ENCODE measurements at regions of chr18 and their contacts with region 1.

Region 1: GRCh38 chr18:26307189-26307773 is 81.0 kb downstream of the TAF4B start:
- DNase-seq: no peak
- H3K4me3 ChIP-seq: no peak overlapping the region
- H3K27ac ChIP-seq: no peak overlapping the region
- H3K4me1 ChIP-seq: no peaks in the 10 kb centered on the region
- H3K27me3 ChIP-seq: no peaks in the 10 kb centered on the region
- CTCF ChIP-seq: peak in 2 of 3 experiments; percentile 49

Region 2: GRCh38 chr18:26034850-26035497 is 272.3 kb before region 1 on chr18:
- intact Hi-C with region 1: no loop called
- DNase-seq: no peak
- H3K4me3 ChIP-seq: no peak overlapping the region
- H3K27ac ChIP-seq: no peak overlapping the region
- H3K4me1 ChIP-seq: no peaks in the 10 kb centered on the region
- H3K27me3 ChIP-seq: no peaks in the 10 kb centered on the region
- CTCF ChIP-seq: no peak

Region 3: GRCh38 chr18:26335571-26336487 is 28.5 kb after region 1 on chr18:
- intact Hi-C with region 1: no loop called
- DNase-seq: no peak
- H3K4me3 ChIP-seq: no peak overlapping the region
- H3K27ac ChIP-seq: no peak overlapping the region
- H3K4me1 ChIP-seq: no peaks in the 10 kb centered on the region
- H3K27me3 ChIP-seq: no peaks in the 10 kb centered on the region
- CTCF ChIP-seq: no peak

Region 4: GRCh38 chr18:26383454-26384270 is 76.4 kb after region 1 on chr18:
- intact Hi-C with region 1: loop called (anchors 5 kb)
- DNase-seq: no peak
- H3K4me3 ChIP-seq: no peak overlapping the region
- H3K27ac ChIP-seq: no peak overlapping the region
- H3K4me1 ChIP-seq: no peaks in the 10 kb centered on the region
- H3K27me3 ChIP-seq: no peaks in the 10 kb centered on the region
- CTCF ChIP-seq: peak; percentile 31 to 68 (median 51)

Region 5: DNA sequence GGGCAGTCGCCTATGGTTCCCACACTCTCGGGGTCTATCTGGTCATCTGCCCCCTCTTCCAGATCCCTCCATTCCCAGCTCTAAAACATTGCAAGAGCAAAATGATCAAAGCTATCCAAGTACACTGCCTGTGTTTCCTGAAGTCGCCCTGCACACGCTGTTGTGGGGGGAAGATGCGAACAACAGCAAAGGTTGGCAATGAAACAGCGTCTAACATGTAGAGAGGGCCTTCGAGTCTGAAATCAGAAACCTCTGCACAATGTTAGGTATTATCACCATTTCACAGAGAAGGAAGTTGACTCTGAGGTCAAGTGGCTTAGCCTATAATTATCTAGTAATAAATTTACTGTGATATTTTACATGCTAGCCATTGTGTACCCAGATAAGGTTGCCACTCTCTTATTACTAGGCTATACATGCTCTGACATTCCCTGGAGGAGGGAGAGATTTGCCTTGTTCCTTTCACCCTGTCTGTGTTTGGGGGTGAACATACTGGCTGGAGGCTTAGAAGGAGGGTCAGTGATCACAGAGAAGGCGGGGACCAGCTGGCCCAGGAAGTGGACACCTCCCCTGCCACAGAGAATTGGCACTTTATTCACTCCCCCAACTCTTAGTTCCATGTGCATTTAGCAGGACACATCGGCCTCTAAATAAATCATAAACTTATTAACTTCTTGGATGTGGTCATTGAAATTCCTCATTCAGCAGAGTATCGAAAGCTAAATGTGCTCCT is 204.2 kb after region 1 on chr18:
- intact Hi-C with region 1: no loop called
- DNase-seq: no peak
- H3K4me3 ChIP-seq: no peak overlapping the region
- H3K27ac ChIP-seq: no peak overlapping the region
- H3K4me1 ChIP-seq: no peaks in the 10 kb centered on the region
- H3K27me3 ChIP-seq: no peaks in the 10 kb centered on the region
- CTCF ChIP-seq: no peak

Region 6: DNA sequence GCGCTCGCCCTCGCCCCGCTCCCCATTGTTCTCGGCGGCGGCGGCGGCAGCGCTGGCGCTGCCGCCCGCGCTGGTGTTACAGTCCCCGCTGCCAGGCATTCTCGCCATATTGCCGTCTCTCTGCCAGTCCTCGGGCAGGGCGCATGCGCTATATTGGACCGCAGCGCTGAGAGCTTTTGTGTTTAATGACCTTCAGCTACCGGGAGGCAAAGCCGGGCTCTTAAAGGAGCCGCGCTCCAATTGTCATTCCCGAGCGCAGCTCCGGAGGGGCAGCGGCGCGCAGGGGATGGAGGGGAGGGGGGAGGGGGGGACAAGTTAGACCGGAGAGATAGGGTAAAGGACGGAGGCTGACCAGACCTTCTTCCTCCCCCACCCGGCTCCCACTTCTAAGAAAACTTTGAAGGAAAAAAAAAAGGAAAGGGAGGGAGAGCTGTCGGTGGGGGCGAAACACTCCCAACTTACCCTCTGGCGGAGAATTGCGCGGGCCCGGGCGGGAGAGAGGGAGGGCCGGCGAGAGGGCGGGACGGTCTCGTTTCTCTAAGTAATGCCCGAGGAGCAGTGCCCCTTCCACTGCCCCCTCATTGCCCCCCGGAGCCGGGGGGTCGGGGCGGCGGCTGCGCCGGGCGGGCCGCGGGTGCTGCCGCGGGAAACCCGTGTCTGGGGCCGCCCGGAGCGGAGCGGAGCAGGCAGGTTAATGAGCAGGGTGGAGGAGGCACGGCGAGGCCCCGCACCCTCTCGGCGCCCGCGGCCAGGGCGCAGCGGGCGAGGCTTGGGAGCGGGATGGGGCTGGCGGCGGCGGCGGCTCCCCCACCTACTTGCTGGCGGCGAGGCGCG is 241.4 kb after region 1 on chr18 and contains the start of gene KCTD1:
- intact Hi-C with region 1: loop called (anchors 10 kb)
- DNase-seq: peak; percentile 18 to 89
- H3K4me3 ChIP-seq: peak within 1 kb of the TSS; percentile 91 to 92
- H3K27ac ChIP-seq: peak within 1 kb of the TSS; percentile 84
- H3K4me1 ChIP-seq: peaks cover 3 to 17% of the 10 kb centered on the region in 2 donors
- H3K27me3 ChIP-seq: no peaks in the 10 kb centered on the region
- CTCF ChIP-seq: no peak
- total RNA-seq, gene KCTD1: 1.3 TPM

Measured in ascending aorta (tissue), 2 donors.